Activated naive CD4-positive, alpha-beta T cell treated with anti-CD3 and anti-CD28 coated beads for 36 hours (primary cell): ENCODE measurements at regions of chr4 and their contacts with region 1.

Region 1: DNA sequence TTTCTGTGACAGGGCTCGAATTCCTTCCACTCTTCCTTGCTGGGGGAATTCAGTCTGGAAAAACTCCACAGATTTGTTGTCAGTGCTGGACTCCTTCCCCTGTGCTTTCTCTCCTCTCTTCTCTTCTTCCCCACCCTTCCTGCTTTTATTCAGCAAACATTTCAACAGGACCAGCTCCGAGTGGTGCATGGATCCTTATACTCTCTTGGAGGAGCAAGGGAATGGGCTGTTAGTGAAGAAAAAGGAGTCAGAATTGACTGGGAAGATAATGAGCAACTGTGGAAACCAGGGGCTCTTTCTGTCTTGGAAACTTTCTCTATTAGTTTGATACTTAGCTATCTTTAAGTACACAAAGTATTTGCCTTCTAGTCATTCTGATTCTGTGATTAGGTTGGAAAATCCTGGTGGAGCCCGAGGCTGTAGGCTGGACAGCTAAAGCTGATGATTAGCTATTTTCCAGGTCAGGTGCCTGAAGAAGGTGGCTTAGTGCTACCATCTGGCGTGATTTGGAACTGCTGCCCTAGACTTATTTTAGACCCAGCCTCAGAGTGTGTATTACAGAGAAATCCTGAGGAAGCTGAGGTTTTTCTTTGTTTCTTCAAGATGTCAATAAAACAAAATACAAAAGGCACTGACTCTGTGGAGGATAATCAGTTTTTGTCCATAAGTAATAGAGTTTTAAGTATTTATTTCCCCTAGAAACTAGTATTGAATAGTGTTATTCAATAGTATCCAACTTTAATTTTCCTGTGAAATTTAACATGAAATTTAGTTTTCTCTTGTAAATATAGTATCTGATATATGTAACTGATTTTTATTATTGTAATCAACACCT is 38.4 kb downstream of the NAP1L5 start:
- DNase-seq: peak; percentile 69
- H3K4me3 Mint-ChIP-seq: no peak overlapping the region
- H3K27ac Mint-ChIP-seq: no peak overlapping the region
- H3K4me1 Mint-ChIP-seq: peaks cover 6% of the 10 kb centered on the region
- H3K27me3 Mint-ChIP-seq: no peaks in the 10 kb centered on the region

Region 2: DNA sequence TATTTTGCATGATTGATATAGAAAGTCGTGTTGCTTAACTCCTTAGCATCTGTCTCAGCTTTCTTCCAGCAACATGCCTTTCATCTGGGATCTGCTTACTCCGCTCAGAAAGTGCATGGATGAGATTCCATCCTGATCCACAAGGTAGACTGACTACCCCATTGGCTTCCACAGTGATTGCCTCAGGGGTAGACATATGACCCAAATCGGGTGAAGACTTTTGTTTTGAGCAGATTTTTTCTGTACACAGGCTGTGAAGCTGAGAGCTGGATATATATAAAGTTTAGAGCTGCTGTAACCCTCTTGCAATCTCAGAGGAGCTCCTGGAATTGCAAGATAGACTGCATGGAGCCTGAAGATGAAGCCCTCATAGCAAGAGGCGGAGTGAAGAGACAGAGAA is 289.3 kb before region 1 on chr4:
- CTCF ChIA-PET with region 1: no interaction called
- intact Hi-C with region 1: loop called (anchors 5 kb)
- DNase-seq: no peak
- H3K4me3 Mint-ChIP-seq: no peak overlapping the region
- H3K27ac Mint-ChIP-seq: no peak overlapping the region
- H3K4me1 Mint-ChIP-seq: no peaks in the 10 kb centered on the region
- H3K27me3 Mint-ChIP-seq: no peaks in the 10 kb centered on the region

Region 3: GRCh38 chr4:88528861-88529260 is 130.4 kb before region 1 on chr4:
- CTCF ChIA-PET with region 1: interaction called, 16 read pairs
- intact Hi-C with region 1: loop called (anchors 1 kb)
- DNase-seq: no peak
- H3K4me3 Mint-ChIP-seq: no peak overlapping the region
- H3K27ac Mint-ChIP-seq: no peak overlapping the region
- H3K4me1 Mint-ChIP-seq: peaks cover 25% of the 10 kb centered on the region
- H3K27me3 Mint-ChIP-seq: no peaks in the 10 kb centered on the region

Region 4: DNA sequence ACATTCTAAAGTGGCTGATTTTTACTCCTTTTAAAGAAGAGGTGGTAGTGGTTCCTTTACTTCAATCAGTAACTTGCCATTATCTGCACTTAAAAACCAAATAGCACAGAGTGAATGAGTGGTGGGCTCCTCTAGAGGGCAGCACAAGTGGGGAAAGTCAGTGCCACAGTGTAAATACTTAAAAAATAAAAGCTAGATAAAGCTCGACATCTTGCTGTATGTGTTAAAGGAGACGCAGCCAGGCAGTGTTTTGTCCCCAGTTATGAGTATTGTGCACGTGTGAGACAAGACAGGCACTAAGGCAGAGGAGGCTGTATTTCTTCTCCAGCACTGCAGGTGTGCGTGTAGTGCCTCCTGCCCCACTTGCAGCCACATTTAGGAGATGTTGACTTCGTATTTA is 13.7 kb after region 1 on chr4:
- CTCF ChIA-PET with region 1: interaction called, 11 read pairs
- intact Hi-C with region 1: no loop called
- DNase-seq: peak; percentile 62
- H3K4me3 Mint-ChIP-seq: no peak overlapping the region
- H3K27ac Mint-ChIP-seq: no peak overlapping the region
- H3K4me1 Mint-ChIP-seq: peaks cover 6% of the 10 kb centered on the region
- H3K27me3 Mint-ChIP-seq: no peaks in the 10 kb centered on the region